ENCODE measurements at regions of chr6 and their contacts with region 1.

Region 1: DNA sequence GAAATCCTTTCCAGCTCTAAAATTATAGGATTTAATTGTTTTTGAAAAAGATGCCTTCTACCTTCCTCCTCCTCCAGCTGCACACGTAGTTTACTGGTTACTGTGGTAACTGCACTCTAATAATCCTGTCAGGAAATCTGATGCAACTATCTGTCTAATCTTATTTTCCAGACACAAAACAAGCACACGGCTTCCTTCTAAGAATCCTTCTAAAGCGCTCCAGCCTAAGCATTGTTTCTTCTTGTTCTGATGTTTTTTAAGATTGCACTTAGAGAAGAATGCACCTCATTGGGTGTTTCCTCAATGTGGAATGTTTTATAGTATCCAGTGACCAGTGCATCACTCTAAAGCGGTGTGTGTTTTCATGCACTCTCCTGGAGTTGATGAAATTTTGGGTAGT is 63.6 kb downstream of the CARMIL1 start:
- DNase-seq: no peak
- H3K4me3 ChIP-seq: no peak overlapping the region
- H3K27ac ChIP-seq: no peak overlapping the region
- H3K4me1 ChIP-seq: peaks cover 6 to 24% (median 14%) of the 10 kb centered on the region in 4 experiments
- H3K27me3 ChIP-seq: no peaks in the 10 kb centered on the region
- CTCF ChIP-seq: no peak
- EP300 ChIP-seq: no peak
- POLR2A ChIP-seq: no peak
- RAD21 ChIP-seq: no peak

Region 2: GRCh38 chr6:25257686-25258348 is 85.0 kb before region 1 on chr6:
- CTCF ChIA-PET with region 1: no interaction called
- POLR2A ChIA-PET with region 1: no interaction called
- DNase-seq: no peak
- H3K4me3 ChIP-seq: no peak overlapping the region
- H3K27ac ChIP-seq: no peak overlapping the region
- H3K4me1 ChIP-seq: no peaks in the 10 kb centered on the region
- H3K27me3 ChIP-seq: no peaks in the 10 kb centered on the region
- CTCF ChIP-seq: no peak
- EP300 ChIP-seq: no peak
- POLR2A ChIP-seq: no peak
- RAD21 ChIP-seq: no peak

Region 3: DNA sequence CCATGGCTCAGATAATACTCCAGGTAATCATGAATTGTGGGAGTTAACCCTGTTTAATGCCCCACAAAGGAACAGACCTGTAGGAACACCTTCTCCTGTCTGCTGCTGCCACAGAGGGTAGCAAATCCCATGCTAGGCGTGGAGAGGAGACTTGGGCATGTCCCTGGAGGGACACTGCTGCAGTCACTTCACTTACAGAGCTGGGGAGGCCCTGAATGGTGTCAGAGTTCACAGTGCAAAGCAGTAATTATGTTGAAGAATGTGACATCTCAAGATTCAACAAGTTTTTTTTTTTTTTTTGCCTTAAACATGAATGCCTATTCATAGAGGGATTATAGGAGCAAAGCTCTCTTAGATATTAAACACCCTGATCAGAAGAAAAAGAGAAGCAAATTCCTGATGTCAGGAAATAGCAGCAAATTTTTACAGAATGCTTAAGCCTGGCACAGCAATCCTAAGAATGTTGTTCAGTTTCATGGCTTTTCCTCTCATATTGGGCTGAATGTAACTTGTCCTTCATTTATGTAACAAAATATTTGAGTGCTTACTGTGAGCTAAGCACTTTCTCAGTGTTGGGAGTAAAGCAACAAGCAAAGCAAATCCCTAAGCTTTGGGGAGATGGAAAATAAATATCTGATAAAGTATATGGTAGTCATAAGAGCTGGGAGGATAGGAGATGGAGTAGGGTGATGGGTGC is 18.6 kb before region 1 on chr6:
- CTCF ChIA-PET with region 1: interaction called, 22 read pairs
- POLR2A ChIA-PET with region 1: interaction called, 8 read pairs
- DNase-seq: no peak
- H3K4me3 ChIP-seq: no peak overlapping the region
- H3K27ac ChIP-seq: no peak overlapping the region
- H3K4me1 ChIP-seq: peaks cover 0 to 13% (median 5%) of the 10 kb centered on the region in 4 experiments; a peak in 4 of 7 replicates
- H3K27me3 ChIP-seq: no peaks in the 10 kb centered on the region
- CTCF ChIP-seq: no peak
- EP300 ChIP-seq: no peak
- POLR2A ChIP-seq: no peak
- RAD21 ChIP-seq: no peak

Region 4: GRCh38 chr6:25354078-25354932 is 11.5 kb after region 1 on chr6:
- CTCF ChIA-PET with region 1: interaction called, 37 read pairs
- POLR2A ChIA-PET with region 1: interaction called, 6 read pairs
- DNase-seq: no peak
- H3K4me3 ChIP-seq: no peak overlapping the region
- H3K27ac ChIP-seq: no peak overlapping the region
- H3K4me1 ChIP-seq: peaks cover under 1 to 6% (median 4%) of the 10 kb centered on the region in 4 experiments; a peak in 4 of 7 replicates
- H3K27me3 ChIP-seq: no peaks in the 10 kb centered on the region
- CTCF ChIP-seq: no peak
- EP300 ChIP-seq: no peak
- POLR2A ChIP-seq: no peak
- RAD21 ChIP-seq: no peak

Region 5: DNA sequence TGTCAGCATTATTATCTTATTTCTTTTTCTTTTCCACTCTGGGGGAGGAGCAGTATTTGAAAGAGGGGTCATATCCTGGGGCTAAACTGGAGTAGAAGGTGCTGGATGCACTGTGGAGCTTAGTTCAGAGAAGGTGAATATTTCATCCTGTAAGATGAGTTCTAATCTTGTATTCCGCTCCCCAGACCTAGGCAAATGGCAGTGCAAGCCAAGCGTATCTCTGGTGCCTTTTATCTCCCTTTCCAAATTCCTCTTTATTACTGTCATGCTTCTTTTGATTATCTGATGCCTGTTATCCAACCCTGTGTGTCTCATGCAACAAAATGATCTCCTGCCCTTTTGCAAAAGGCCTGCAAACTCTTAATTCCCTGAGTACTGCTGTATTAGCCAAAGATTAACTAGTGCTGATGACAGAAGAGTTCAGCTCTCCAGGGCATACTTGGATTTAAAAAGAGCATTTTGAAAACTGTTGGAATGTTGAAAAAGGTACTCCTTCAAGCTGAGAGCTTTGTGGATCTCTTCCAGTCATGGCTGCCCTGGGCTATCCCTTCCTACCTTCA is 74.3 kb after region 1 on chr6:
- CTCF ChIA-PET with region 1: no interaction called
- POLR2A ChIA-PET with region 1: no interaction called
- DNase-seq: no peak
- H3K4me3 ChIP-seq: no peak overlapping the region
- H3K27ac ChIP-seq: no peak overlapping the region
- H3K4me1 ChIP-seq: peaks cover 0 to 19% (median 16%) of the 10 kb centered on the region in 4 experiments; a peak in 4 of 7 replicates
- H3K27me3 ChIP-seq: no peaks in the 10 kb centered on the region
- CTCF ChIP-seq: no peak
- EP300 ChIP-seq: no peak
- POLR2A ChIP-seq: no peak
- RAD21 ChIP-seq: no peak

Measured in H1 (cell line).